Activated naive CD4-positive, alpha-beta T cell treated with anti-CD3 and anti-CD28 coated beads, Interleukin-2, amount 10 ng/mL, durations not matched to agents 7 days and 5 days (primary cell): ENCODE measurements at regions of chr6 and their contacts with region 1.

Region 1: DNA sequence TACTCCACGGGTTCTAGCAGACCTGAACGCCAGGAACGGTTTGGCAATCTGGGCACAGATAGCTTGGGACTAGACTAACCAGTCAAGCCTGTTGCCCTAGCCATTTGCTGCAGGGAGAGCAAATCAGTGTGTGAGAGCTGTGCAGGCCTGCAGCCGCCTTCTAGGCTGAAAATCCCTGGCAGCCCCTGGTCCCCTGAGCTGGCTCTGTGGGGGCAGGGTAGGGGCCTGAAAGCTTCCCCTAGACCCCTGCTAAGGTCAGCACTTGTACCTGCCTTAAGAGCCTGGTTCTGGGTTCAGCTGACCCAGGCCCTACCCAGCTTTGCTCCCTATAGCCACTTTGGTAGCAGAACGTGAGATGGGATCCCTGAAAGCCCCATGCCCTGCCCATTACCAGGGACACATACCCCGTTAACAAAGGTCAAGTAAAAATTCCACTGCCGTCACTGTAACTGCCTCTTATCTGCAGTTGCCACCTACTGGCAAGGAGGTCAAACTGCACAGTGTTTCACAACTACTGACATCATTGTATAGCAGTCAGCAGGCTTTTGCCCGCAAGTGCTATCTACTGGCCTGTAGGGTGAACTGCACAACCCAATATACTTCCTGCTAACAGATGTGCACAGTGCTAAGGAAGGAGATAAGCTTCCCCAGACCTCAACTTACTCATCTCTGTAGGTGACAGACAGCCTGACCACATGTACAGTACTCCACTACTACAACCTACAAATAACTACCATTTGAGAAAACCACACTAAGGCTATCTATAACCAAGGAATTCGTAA is 95.1 kb upstream of the OLIG3 start:
- DNase-seq: peak; percentile 79
- H3K4me3 Mint-ChIP-seq: no peak overlapping the region
- H3K27ac Mint-ChIP-seq: no peak overlapping the region
- H3K4me1 Mint-ChIP-seq: peaks cover 19% of the 10 kb centered on the region
- H3K27me3 Mint-ChIP-seq: peaks cover 37% of the 10 kb centered on the region

Region 2: DNA sequence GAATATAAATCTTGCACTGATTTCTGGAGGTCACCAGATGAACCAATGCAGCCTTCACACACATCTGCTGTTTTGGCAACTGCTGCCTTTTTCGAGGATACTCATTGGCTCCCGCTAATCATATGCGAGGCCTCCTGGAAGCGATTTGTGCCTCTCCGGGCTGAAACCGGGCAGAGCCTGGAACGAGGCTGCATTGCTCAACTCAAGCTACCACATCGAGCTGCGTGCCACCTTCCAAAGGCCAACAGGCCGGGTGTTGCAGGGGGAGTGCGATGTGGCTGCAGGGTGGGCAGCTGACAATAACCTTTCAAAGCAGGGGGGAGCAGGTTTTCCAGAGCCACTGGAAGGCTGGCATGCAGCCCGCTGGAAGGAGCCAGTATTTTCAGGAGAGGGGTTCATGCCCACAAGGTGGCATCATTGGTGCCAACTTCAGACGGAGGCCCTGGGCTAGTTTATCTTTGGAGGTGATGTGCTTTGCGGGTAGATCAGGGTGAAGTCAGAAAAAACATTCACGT is 247.5 kb before region 1 on chr6:
- CTCF ChIA-PET with region 1: interaction called, 13 read pairs
- DNase-seq: peak; percentile 64
- H3K4me3 Mint-ChIP-seq: peak overlapping the region; percentile 35
- H3K27ac Mint-ChIP-seq: peak overlapping the region; percentile 14
- H3K4me1 Mint-ChIP-seq: peaks cover 25% of the 10 kb centered on the region
- H3K27me3 Mint-ChIP-seq: peaks cover 19% of the 10 kb centered on the region

Region 3: DNA sequence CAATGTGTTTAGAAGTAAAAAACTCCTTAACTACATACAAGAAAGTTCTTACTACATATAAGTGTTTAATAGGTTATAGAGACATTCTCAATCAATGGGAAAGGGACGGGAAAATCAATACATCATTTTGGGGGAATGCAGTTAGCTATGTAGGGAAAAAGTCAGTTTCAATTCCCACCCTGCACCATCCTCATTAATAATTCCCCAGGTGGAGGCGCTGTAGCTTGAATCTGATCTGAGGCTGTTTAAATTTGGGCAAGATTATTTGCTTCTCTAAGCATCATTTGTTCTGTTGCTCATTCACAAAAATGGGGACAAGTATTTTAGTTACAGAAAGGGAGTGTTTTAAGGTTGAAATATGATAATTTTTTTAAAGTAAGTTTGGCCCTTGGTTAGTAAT is 114.2 kb before region 1 on chr6:
- CTCF ChIA-PET with region 1: interaction called, 17 read pairs
- DNase-seq: peak; percentile 30
- H3K4me3 Mint-ChIP-seq: no peak overlapping the region
- H3K27ac Mint-ChIP-seq: no peak overlapping the region
- H3K4me1 Mint-ChIP-seq: no peaks in the 10 kb centered on the region
- H3K27me3 Mint-ChIP-seq: peaks cover 53% of the 10 kb centered on the region

Region 4: DNA sequence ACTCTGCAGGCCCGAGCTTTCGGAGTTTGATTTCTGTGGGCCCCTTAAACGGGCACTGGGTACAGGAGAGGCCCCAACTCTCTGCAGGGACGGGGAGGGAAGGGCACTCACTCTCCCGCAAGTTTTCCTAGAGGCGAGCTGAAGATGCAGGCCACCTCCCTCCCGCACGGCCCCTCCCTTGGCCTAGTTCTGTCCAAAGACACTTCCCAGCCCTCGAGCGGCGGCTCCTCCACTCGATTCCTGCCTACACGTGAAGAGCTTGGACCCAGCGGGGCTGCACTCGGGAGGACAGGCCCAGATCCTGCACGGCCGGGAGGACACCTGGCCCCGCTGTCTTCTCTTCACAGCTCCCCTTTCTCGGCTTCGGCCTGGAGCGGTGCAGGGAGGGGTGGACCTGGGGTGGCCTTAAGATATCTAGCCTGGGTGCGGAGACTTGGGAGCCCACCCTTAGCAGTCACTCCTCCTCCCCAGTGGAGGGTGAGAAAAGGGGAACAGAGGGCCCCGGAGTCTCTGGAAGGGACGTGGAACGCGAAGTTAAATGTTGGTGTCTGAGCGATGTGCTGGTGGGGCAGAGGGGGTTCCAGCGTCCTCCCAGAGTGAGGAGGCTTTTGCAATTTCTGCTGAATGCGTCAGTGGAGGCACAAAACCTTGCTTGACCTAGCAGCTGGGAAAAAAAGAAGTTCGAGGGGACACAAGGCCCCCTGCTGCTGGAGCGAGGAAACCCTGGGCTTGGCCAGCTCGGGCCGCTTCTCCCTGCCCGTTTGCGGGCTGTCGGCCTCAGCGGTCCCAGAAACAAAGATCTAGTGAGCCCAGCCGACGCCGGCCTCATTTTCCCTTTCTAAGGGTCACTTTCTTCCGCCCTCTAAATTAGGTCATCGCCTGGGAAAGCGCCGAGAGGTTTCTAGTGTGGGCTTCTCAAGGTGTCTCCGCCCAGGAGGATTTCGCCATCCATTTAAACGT is 99.9 kb before region 1 on chr6:
- CTCF ChIA-PET with region 1: interaction called, 17 read pairs
- DNase-seq: no peak
- H3K4me3 Mint-ChIP-seq: peak overlapping the region; percentile 8
- H3K27ac Mint-ChIP-seq: peak overlapping the region; percentile 31
- H3K4me1 Mint-ChIP-seq: peaks cover 54% of the 10 kb centered on the region
- H3K27me3 Mint-ChIP-seq: peaks cover 96% of the 10 kb centered on the region

Region 5: DNA sequence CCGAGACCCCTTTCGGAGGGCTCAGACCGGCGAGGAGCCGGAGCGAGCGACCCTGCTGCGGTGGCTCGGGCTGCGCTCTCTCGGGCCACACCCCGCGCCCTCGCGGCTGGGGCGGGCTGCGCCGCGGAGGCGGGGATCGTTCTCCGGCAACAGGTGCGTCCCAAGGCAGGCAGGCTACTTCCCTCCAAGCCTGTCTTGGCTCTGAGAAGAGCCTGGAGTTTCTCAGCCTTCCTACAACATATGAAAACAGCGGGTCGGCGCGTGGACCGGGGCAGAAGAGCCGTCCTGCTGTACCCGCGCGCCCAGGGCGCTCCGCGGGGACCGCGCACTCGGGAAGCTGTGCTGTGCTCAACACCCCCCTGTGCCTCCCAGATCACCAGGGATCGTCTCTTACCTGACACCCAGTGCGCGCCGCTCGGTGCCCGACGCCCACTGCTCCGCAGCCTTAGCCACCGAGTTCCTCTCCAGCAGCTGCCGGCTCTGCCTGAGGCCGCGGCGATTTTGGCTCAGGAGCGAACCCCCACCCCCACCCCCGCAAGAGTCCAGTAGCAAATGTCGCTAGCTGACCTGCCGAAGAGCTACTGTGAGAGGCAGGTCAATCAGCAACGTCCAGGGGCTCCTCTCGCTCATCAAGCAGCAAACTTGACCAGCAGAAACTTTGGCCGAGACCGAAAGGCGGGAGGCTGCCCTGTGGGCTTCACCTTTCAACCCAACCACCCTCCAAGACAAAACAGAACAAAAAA is 91.4 kb before region 1 on chr6:
- CTCF ChIA-PET with region 1: interaction called, 17 read pairs
- DNase-seq: peak; percentile 34
- H3K4me3 Mint-ChIP-seq: peak overlapping the region; percentile 71
- H3K27ac Mint-ChIP-seq: no peak overlapping the region
- H3K4me1 Mint-ChIP-seq: peaks cover 47% of the 10 kb centered on the region
- H3K27me3 Mint-ChIP-seq: peaks cover 69% of the 10 kb centered on the region

Region 6: DNA sequence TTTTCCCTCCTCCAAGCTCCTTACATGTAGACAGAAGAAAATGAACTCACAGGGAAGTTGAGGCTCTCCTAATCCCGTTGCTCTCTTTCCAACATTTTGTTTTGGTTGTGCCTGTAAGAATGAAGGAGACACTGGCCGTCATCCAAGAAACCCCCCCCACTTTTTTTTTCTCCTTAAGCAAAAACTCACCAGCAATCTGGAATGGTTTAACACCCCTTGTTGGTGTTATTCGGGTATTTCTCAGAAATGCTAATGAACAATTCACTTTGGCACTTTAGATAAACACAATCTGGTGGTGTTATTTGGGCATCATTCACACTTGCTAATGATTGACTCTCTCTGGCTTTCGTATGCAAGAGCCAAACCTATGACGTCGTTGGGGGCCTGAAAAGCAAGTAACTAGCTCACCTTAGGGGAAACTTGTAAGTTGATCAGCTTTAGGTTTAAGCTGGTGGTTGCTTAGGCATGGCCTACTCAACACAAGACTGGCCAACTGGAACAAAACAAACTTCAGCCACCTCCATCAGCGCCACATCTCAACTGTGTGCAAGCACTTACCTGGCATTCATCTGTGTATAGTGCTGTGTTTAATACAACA is 70.8 kb before region 1 on chr6:
- CTCF ChIA-PET with region 1: interaction called, 12 read pairs
- DNase-seq: no peak
- H3K4me3 Mint-ChIP-seq: no peak overlapping the region
- H3K27ac Mint-ChIP-seq: no peak overlapping the region
- H3K4me1 Mint-ChIP-seq: peaks cover 5% of the 10 kb centered on the region
- H3K27me3 Mint-ChIP-seq: peaks cover 61% of the 10 kb centered on the region